Activated CD8-positive, alpha-beta memory T cell treated with anti-CD3 and anti-CD28 coated beads, Interleukin-2, amount 10 ng/mL, durations not matched to agents 7 days and 5 days (primary cell): ENCODE measurements at regions of chr3 and their contacts with region 1.

Region 1: DNA sequence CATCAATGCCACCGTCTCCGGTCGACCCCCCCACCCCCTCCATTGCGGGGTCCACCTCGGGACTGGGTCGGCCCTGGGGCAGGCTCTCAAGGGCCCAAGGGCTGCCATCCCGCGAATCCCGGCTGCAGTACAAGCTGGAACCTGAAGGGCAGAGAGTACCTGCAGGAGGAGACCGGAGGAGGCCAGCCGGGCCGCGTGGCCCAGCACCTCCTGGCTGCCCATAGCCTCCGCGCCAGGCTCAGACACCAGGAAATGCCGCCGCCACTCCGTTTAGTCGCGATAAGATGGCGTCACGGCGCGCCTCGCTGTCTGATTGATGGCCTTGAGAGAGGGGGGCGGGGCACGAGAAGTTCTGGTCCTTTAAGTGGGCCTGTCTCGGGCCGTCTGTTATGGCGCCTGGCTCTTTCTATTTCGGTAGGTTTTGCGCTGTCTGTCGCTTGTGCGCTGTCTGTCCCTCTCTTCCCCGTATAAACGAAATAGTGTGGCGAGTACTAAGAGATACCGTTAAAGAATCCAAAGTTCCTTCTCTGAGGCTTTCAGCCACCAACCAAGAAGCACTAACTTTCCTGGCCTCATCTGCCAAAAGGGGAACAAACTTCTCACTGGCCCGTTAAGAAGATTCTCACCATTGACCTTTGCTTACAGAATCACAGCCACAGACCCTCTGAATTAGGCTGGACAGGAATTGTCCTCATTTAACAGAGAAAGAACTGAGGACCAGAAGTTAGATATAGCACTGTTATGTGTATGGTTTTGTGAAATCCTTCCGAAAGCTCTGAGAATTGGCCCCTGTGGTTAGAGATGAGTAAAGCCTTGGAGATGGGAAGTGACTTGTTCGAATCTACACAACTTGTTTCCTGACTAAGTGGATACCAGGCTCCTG is at the start of gene RFT1:
- DNase-seq: peak; percentile 99
- ATAC-seq: peak; percentile 96
- H3K4me3 Mint-ChIP-seq: peak within 1 kb of the TSS; percentile 98
- H3K27ac Mint-ChIP-seq: peak within 1 kb of the TSS; percentile 92
- H3K4me1 Mint-ChIP-seq: peaks cover 28% of the 10 kb centered on the region
- H3K27me3 Mint-ChIP-seq: no peaks in the 10 kb centered on the region
- total RNA-seq, gene RFT1: 32.4 to 38.3 TPM

Region 2: DNA sequence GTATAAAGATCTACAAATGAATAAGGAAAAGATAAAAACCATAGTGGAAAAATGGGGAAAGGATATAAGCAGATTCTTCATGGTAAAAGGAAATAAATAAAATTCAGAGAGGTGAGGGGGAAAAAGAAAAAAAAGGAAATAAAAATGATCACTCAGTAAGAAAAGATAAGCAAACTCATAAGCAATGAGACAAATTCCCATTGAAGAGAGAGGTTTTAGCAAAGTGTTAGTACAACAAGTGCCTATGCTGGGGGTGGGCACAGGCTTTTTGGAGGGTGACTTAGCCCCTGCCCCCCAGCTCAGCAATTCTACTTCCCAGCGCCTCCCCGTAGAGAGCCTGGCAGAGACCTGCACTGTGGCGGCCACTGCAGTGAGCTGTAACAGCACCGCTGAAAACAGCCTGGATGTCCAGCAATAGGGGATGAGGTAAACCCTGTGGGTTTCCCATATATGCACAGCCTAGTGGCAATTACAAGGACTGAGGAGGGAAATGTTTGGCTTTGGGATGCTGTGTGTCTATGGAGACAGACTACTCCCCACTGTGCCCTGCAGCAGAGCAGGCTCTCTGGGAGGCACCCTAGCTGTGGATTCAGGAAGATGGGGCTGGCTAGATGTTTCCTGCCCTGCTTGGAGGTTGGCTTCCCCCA is 60.9 kb before region 1 on chr3:
- CTCF ChIA-PET with region 1: no interaction called
- DNase-seq: no peak
- ATAC-seq: no peak
- H3K4me3 Mint-ChIP-seq: no peak overlapping the region
- H3K27ac Mint-ChIP-seq: no peak overlapping the region
- H3K4me1 Mint-ChIP-seq: peaks cover 15% of the 10 kb centered on the region
- H3K27me3 Mint-ChIP-seq: peaks cover 6% of the 10 kb centered on the region

Region 3: GRCh38 chr3:53114011-53114400 is 16.4 kb before region 1 on chr3:
- CTCF ChIA-PET with region 1: interaction called, 29 read pairs
- DNase-seq: peak; percentile 91
- ATAC-seq: peak; percentile 81
- H3K4me3 Mint-ChIP-seq: no peak overlapping the region
- H3K27ac Mint-ChIP-seq: no peak overlapping the region
- H3K4me1 Mint-ChIP-seq: peaks cover 20% of the 10 kb centered on the region
- H3K27me3 Mint-ChIP-seq: no peaks in the 10 kb centered on the region

Region 4: GRCh38 chr3:53144862-53145712 is 14.7 kb after region 1 on chr3:
- CTCF ChIA-PET with region 1: interaction called, 12 read pairs
- DNase-seq: no peak
- ATAC-seq: no peak
- H3K4me3 Mint-ChIP-seq: no peak overlapping the region
- H3K27ac Mint-ChIP-seq: no peak overlapping the region
- H3K4me1 Mint-ChIP-seq: no peaks in the 10 kb centered on the region
- H3K27me3 Mint-ChIP-seq: no peaks in the 10 kb centered on the region

Region 5: DNA sequence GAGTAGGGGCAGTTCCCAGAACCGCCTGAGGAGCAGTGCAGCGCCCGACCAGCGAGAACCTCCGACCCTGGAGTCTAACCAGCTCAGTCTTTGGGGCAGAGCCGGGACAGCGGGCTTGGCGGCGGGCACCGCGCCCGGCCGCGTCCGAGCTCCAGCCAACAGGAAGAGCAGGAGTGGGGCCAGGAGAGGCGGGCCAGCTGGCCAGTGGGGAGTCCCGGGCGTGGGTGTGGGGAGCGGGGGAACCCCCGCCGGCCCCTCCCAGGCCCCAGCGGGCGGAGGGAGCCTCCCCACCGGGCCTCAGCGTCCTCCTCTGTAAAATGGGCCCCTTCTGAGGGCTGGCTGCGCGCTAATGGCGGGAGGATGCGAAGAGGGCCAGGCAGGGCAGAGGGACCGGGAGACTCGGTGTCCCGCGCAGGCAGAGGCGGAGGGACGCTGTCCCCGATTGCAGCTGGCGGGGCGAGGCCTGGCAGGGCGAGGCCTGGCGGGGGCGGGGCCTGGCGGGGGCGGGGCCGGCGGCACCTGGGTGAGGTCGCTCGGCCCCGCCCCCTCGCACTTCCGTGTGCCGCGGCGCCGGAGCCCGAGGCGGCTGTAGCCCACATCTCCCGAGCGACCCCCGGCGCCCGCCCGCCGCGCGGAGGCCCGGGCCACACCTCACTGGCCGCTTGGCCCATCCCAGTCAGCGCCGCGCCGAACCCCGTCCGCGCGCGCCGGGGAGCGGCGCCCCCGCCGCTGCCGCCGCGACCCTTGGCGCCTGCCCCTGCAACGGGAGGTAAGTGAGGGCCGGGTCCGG is 30.4 kb after region 1 on chr3 and contains the start of gene PRKCD:
- CTCF ChIA-PET with region 1: interaction called, 38 read pairs
- DNase-seq: peak; percentile 85
- ATAC-seq: peak; percentile 82
- H3K4me3 Mint-ChIP-seq: peak within 1 kb of the TSS; percentile 74
- H3K27ac Mint-ChIP-seq: peak within 1 kb of the TSS; percentile 72
- H3K4me1 Mint-ChIP-seq: peaks cover 22% of the 10 kb centered on the region
- H3K27me3 Mint-ChIP-seq: peaks cover 34% of the 10 kb centered on the region
- total RNA-seq, gene PRKCD: 17.2 to 18.7 TPM